Pancreas (tissue), 10 donors: ENCODE measurements at regions of chr6 and their contacts with region 1.

Region 1: DNA sequence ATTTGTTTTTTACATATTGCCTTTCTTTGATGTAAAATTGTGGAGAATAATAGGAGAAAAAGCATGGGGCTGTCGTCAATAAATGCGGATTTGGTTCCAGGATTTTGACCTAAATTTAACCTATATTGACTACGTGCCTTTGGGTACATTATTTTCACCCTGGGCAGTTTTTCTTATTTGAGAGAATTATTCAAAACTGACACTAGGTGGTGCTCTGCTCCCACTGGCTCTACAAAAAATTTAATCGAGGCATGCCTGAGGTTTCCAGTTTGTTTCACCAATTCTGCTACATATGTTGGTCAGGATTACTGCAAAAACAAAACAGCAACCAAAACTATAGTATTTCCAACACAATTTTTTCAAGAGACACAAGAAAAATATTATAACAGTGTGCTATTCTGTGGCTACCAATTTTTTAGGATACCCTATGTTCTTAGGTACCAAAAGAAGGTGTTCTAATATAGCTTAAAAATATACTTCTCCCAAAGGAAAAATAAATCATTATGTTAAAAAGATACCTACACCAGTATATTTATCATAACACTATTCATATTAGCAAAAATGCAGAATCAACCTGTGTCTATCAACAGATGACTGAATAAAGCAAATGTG is 48.6 kb upstream of the FABP7 start:
- DNase-seq: peak in 1 of 6 donors; percentile 23
- ATAC-seq: peak in 3 of 4 donors; percentile 74 to 84 (median 81)
- H3K4me3 ChIP-seq: no peak overlapping the region
- H3K27ac ChIP-seq: no peak overlapping the region
- H3K4me1 ChIP-seq: no peaks in the 10 kb centered on the region
- H3K27me3 ChIP-seq: no peaks in the 10 kb centered on the region
- CTCF ChIP-seq: peak; percentile 27 to 59 (median 52)

Region 2: GRCh38 chr6:122553697-122554096 is 177.2 kb before region 1 on chr6:
- intact Hi-C with region 1: no loop called
- DNase-seq: no peak
- ATAC-seq: peak in 1 of 4 donors; percentile 54
- H3K4me3 ChIP-seq: no peak overlapping the region
- H3K27ac ChIP-seq: no peak overlapping the region
- H3K4me1 ChIP-seq: peaks cover 0 to 9% (median 0%) of the 10 kb centered on the region in 3 donors
- H3K27me3 ChIP-seq: no peaks in the 10 kb centered on the region
- CTCF ChIP-seq: no peak

Region 3: GRCh38 chr6:122789182-122790027 is 58.5 kb after region 1 on chr6 and contains the start of gene SMPDL3A:
- intact Hi-C with region 1: loop called in 1 of 3 experiments (anchors 10 kb)
- DNase-seq: peak; percentile 77 to 92 (median 82)
- ATAC-seq: peak; percentile 75 to 84 (median 80)
- H3K4me3 ChIP-seq: peak within 1 kb of the TSS; percentile 47 to 83 (median 66)
- H3K27ac ChIP-seq: peak within 1 kb of the TSS; percentile 99 to 100 (median 99)
- H3K4me1 ChIP-seq: peaks cover 15 to 38% (median 33%) of the 10 kb centered on the region in 3 donors
- H3K27me3 ChIP-seq: no peaks in the 10 kb centered on the region
- CTCF ChIP-seq: peak in 1 of 4 donors; percentile 28
- total RNA-seq, gene SMPDL3A: 8.7 to 12.6 (median 10.6) TPM